ENCODE measurements at regions of chr3 and their contacts with region 1.

Region 1: DNA sequence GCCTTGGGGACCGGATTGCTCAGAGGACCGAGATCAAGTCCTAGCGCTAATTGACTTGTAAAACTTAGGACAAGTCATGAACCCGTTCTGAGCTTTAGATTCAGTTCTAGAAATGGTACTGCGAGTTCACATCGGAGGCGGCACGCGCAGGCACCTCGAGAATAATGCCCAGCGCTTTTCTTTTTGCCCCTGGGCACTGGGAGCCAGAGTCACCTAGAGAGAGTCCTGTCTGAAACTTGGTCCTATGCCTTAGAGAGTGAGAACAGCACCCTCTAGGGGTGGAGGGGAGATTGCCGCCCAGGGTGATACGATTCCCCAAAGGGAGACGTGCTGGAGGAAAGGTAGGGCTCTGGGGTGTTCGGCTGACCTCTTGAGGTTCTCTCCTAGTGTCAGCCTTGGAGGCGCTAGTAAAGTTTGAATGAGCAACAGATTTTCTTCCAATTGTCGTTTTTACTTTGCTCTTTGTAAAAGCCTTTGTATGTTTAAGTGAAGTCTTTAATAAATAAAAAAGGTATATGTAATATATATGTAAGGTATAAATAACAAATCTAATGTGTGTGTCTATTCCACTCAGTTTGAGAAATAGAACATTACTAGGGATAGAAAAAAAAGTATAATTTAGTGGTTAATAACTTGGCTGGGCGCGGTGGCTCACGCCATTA is 826 bp downstream of the EEF1AKMT4 start:
- DNase-seq: peak; percentile 89
- H3K4me3 ChIP-seq: peak overlapping the region; percentile 15 to 100 (median 76)
- H3K27ac ChIP-seq: no peak overlapping the region
- H3K4me1 ChIP-seq: peaks cover 7% of the 10 kb centered on the region
- H3K27me3 ChIP-seq: no peaks in the 10 kb centered on the region
- CTCF ChIP-seq: peak; percentile 88 to 93
- POLR2A ChIP-seq: no peak

Region 2: GRCh38 chr3:183650554-183650953 is 599.7 kb before region 1 on chr3:
- CTCF ChIA-PET with region 1: no interaction called
- POLR2A ChIA-PET with region 1: no interaction called
- dilution Hi-C with region 1: no loop called
- intact Hi-C with region 1: no loop called
- DNase-seq: no peak
- H3K4me3 ChIP-seq: no peak overlapping the region
- H3K27ac ChIP-seq: no peak overlapping the region
- H3K4me1 ChIP-seq: no peaks in the 10 kb centered on the region
- H3K27me3 ChIP-seq: no peaks in the 10 kb centered on the region
- CTCF ChIP-seq: no peak
- POLR2A ChIP-seq: no peak

Region 3: GRCh38 chr3:184040010-184040409 is 210.3 kb before region 1 on chr3:
- CTCF ChIA-PET with region 1: interaction called, 3 read pairs
- POLR2A ChIA-PET with region 1: no interaction called
- dilution Hi-C with region 1: no loop called
- intact Hi-C with region 1: loop called (anchors 5 kb)
- DNase-seq: peak; percentile 22
- H3K4me3 ChIP-seq: no peak overlapping the region
- H3K27ac ChIP-seq: no peak overlapping the region
- H3K4me1 ChIP-seq: no peaks in the 10 kb centered on the region
- H3K27me3 ChIP-seq: peaks cover 5 to 7% of the 10 kb centered on the region in 2 experiments
- CTCF ChIP-seq: peak; percentile 38 to 44
- POLR2A ChIP-seq: no peak

Region 4: DNA sequence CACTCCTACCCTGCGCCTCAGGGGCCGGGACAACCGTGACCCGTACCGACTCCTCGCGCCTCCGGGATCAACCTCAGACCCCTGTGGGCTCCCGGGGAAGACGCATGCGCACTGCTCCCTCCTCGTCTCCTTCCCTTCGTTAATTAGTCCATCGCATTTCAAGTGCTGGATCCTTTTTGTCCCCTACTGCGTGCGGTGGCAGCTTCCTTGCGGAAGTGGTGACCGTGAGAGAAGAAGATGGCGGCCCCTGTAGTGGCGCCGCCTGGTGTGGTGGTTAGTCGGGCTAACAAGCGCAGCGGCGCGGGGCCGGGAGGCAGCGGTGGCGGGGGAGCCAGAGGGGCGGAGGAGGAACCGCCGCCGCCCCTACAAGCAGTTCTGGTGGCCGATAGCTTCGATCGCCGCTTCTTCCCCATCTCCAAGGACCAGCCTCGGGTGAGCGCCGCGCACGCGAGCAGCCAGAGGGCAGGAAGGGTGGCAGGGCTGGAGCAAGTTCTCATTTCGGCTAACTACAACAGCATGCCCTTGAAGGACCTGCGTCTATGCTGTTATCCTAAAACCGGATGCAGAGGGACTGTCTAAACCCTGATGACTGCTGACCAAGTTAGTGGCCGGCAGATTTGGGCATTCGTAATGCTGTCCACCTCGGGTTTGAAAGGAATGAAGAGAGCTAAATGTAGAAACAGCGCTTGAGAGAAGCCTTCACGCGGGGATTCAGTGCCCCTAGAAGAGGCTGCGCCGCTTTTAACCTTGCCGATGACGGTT is 115.0 kb before region 1 on chr3 and contains the start of gene EIF2B5:
- CTCF ChIA-PET with region 1: no interaction called
- POLR2A ChIA-PET with region 1: no interaction called
- dilution Hi-C with region 1: no loop called
- intact Hi-C with region 1: loop called (anchors 1 kb)
- DNase-seq: peak; percentile 96
- H3K4me3 ChIP-seq: peak within 1 kb of the TSS; percentile 67 to 92 (median 90)
- H3K27ac ChIP-seq: peak within 1 kb of the TSS; percentile 56
- H3K4me1 ChIP-seq: peaks cover 27% of the 10 kb centered on the region
- H3K27me3 ChIP-seq: no peaks in the 10 kb centered on the region
- CTCF ChIP-seq: peak; percentile 26 to 41
- POLR2A ChIP-seq: peak; percentile 77
- total RNA-seq, gene EIF2B5: 38.8 and 44.7 TPM in 2 replicates

Region 5: DNA sequence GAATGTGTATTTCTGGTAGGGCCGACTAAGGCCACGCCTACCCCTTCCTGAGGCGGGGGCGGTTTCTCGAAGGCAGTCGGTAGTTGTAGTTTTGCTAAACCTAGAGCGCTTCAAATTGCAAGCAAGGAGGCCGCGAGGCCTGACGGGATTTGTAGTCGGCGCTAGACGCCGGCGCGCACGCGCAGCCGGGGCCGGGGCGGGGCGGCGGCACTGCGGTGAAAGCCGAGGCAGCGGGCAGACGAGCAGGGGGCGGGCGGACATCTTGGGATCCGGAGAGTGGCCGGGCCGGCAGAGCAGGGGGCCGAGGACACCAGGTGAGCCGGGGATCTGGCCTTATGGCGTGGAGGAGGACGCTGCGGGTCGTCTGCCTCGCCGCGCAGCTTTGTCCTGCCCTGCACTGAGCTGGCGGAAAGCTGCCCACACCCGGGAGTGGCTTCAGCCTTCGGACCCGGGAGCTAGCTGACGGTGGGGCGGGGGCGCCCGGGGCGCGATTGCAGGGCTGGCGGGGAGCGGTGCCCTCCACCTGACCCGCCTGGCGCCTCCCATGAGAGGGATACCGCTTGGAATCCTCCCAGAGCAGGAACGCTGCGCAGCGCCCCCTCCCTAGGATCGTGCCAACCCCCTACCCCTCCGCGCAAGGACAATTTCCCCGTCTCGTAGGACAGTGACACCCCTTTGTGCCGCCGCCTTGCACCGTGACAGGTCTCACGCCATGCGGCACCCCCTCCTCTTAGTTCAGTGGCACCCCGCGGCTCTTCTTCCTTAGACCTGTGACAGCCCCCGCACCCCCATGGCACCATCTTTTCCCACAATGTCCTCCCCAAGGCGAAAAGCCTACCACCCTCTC is 75.4 kb before region 1 on chr3 and contains the start of gene AP2M1:
- CTCF ChIA-PET with region 1: interaction called, 4 read pairs
- POLR2A ChIA-PET with region 1: no interaction called
- dilution Hi-C with region 1: no loop called
- intact Hi-C with region 1: loop called (anchors 1 kb)
- DNase-seq: peak; percentile 100
- H3K4me3 ChIP-seq: peak within 1 kb of the TSS; percentile 84 to 97 (median 87)
- H3K27ac ChIP-seq: peak within 1 kb of the TSS; percentile 73
- H3K4me1 ChIP-seq: peaks cover 22% of the 10 kb centered on the region
- H3K27me3 ChIP-seq: no peaks in the 10 kb centered on the region
- CTCF ChIP-seq: peak in 1 of 2 donors; percentile 12
- POLR2A ChIP-seq: peak; percentile 91
- total RNA-seq, gene AP2M1: 400 and 431 TPM in 2 replicates

Region 6: GRCh38 chr3:184229394-184230080 is 20.8 kb before region 1 on chr3 and contains the start of gene VWA5B2:
- CTCF ChIA-PET with region 1: interaction called, 21 read pairs
- POLR2A ChIA-PET with region 1: no interaction called
- dilution Hi-C with region 1: no loop called
- intact Hi-C with region 1: loop called (anchors 1 kb)
- DNase-seq: peak; percentile 60
- H3K4me3 ChIP-seq: peak within 1 kb of the TSS in 1 of 3 experiments; percentile 25
- H3K27ac ChIP-seq: no peak within 1 kb of the TSS
- H3K4me1 ChIP-seq: peaks cover 4% of the 10 kb centered on the region
- H3K27me3 ChIP-seq: peaks cover 38 to 57% of the 10 kb centered on the region in 2 experiments
- CTCF ChIP-seq: peak in 1 of 2 donors; percentile 34
- POLR2A ChIP-seq: no peak
- total RNA-seq, gene VWA5B2: not detected in 2 replicates

Region 7: GRCh38 chr3:184289426-184289938 is 39.2 kb after region 1 on chr3:
- CTCF ChIA-PET with region 1: interaction called, 6 read pairs
- POLR2A ChIA-PET with region 1: no interaction called
- dilution Hi-C with region 1: no loop called
- intact Hi-C with region 1: loop called (anchors 2 kb)
- DNase-seq: peak; percentile 52
- H3K4me3 ChIP-seq: no peak overlapping the region
- H3K27ac ChIP-seq: no peak overlapping the region
- H3K4me1 ChIP-seq: no peaks in the 10 kb centered on the region
- H3K27me3 ChIP-seq: peaks cover 0 to 3% of the 10 kb centered on the region in 2 experiments
- CTCF ChIP-seq: peak; percentile 67
- POLR2A ChIP-seq: no peak